ENCODE measurements at regions of chr5 and their contacts with region 1.

Region 1: GRCh38 chr5:151492729-151493128 is 45.3 kb downstream of the SLC36A1 start:
- DNase-seq: no peak
- CTCF ChIP-seq: no peak

Region 2: DNA sequence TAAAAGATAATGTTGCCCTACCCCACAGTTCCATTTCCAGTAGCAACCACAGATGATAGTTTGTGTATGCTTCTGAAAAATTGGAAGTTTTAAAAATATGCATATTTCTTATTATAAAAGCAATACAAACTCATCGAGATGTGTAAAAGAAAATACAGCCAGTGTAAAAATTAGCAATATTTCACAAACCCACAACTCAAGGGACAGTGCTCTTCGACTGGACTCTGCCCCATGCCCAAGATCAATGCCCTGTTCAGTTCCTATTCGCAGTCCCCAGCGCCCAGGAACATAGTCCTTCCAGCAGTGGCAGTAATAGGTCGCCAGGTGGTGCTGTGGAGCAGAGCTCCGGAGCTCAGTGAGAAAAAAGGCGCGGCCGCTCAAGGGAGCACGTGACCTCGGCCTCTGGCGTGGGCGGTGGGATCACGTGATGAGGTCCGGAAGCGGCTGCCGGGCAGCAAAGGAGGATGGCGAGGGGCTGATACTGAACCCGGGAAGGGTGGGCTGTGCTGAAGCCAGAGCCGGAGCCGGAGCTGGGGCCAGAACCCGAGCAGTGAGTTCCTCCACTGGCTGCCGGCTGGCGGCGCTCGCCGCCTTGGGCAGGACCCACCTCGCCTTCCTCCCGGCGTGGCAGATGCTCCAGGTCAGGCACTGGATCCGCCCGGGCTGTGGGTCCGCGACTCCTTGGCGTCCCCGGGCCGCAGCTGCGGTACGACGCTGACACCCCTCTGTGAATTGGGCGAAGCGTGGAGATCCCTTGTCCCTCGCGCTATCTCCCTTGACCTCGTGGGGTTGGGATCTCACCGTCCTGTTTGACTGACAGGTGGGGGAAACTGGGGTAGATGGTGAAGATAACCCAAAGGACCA is 45.3 kb before region 1 on chr5 and contains the start of gene SLC36A1:
- in situ Hi-C with region 1: loop called (anchors 10 kb)
- DNase-seq: peak; percentile 93
- CTCF ChIP-seq: peak; percentile 91

Measured in GM13976 (cell line).